Heart right ventricle (tissue), 16 donors: ENCODE measurements at regions of chr2 and their contacts with region 1.

Region 1: GRCh38 chr2:960061-960736 is 9.6 kb downstream of the SNTG2 start:
- DNase-seq: no peak
- ATAC-seq: no peak
- H3K4me3 ChIP-seq: no peak overlapping the region
- H3K27ac ChIP-seq: no peak overlapping the region
- H3K4me1 ChIP-seq: no peaks in the 10 kb centered on the region
- H3K27me3 ChIP-seq: peaks cover 0 to 33% (median 3%) of the 10 kb centered on the region in 7 donors
- CTCF ChIP-seq: no peak

Region 2: DNA sequence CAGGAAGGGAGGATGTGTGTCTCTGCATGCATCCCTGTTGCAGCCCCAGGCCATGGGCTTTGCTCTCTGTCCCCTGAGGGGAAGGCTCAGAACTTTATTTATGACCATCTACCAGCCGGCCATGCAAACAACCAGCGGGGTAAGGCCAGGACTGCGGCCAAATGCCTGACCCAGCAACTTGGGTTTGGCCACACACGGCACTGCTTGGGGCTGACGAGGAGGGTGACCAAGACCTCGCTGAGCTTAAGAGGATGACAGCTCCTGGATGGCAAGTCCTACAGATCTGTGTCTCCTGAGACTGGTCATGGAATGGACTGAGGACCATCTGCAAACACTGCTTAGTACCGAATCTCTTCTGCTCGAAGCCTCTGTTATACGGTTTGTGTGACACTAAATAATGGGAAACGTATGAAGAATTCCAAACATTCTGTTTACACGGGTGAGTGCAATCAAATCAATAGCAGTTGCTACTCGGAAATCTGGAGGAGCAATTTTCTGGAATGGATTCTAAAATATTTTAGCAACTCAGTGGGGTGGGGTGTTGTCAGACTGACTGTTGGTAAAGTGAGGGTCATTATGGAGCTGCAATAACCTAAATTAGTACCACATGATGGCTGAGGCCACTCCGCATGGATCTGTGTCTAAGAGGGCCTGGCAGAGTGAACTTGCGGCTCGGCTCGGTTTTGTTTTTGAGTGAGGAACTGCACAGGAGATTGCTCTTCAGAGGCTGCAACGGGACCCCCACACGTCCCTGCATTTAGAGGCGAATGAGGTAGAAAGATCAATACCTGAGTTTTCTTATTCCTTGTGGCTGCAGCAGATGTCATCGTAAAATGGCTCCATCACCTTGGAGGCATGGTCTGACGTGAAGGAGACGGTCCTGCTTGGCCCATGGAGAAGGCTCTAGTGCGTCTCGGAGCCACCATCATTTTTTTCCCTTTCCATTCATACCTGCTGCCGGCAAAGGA is 309.6 kb before region 1 on chr2:
- intact Hi-C with region 1: no loop called
- DNase-seq: no peak
- ATAC-seq: no peak
- H3K4me3 ChIP-seq: no peak overlapping the region
- H3K27ac ChIP-seq: no peak overlapping the region
- H3K4me1 ChIP-seq: no peaks in the 10 kb centered on the region
- H3K27me3 ChIP-seq: peaks cover 0 to 40% (median 27%) of the 10 kb centered on the region in 7 donors
- CTCF ChIP-seq: no peak

Region 3: GRCh38 chr2:1538663-1539062 is 578.5 kb after region 1 on chr2:
- intact Hi-C with region 1: loop called in 2 of 10 experiments (anchors 5 to 10 kb)
- DNase-seq: no peak
- ATAC-seq: no peak
- H3K4me3 ChIP-seq: no peak overlapping the region
- H3K27ac ChIP-seq: no peak overlapping the region
- H3K4me1 ChIP-seq: no peaks in the 10 kb centered on the region
- H3K27me3 ChIP-seq: peaks cover 0 to 10% (median 0%) of the 10 kb centered on the region in 7 donors
- CTCF ChIP-seq: peak in 2 of 9 donors; percentile 30 to 32